Common myeloid progenitor, CD34-positive (primary cell): ENCODE measurements at regions of chr7 and their contacts with region 1.

Region 1: DNA sequence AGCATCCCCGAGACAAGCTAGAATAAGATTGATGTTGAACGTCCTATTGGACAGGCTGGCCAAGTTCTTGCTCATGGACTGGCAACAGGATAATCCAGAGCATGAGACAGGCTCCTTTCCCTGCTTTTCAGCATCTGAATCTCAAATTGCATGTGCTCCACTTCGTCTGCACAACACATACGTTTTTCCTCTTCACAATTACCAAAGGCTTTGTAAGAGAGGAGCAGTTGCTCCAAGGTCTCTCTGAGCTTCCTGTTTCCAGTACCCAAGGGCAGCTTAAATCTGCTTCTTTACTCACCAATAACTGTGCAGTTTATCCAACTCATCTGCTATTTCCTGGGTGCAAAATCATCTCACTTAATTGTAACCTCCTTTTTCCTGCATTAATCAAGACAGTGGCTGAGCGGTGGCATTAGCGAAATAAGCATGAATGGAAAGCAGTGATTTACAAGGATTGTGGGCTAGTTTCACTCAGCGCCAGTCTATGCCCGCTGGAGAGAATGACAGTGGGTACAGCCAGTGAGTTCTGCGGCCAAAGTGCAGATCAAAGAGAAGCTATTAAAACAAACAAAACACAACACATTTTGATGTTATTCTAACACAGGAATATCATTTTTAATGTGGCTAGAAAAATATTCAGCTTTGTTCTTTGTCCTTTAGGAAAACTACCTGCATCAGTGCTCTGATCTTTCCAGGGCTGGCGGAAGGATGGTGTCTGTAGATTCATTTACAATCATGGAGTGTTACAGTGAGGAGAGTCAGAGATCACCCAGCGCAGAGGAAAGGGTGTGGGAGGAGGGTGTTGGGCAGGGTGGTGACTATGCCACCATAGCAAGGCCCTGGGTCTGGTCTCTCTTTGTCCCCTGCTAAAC is 79.8 kb downstream of the CHN2 start:
- DNase-seq: peak in 2 of 3 donors; percentile 44 to 46
- H3K4me3 ChIP-seq: no peak overlapping the region
- H3K27ac ChIP-seq: no peak overlapping the region
- H3K4me1 ChIP-seq: peaks cover 15 to 27% (median 22%) of the 10 kb centered on the region in 4 experiments
- H3K27me3 ChIP-seq: no peaks in the 10 kb centered on the region

Region 2: DNA sequence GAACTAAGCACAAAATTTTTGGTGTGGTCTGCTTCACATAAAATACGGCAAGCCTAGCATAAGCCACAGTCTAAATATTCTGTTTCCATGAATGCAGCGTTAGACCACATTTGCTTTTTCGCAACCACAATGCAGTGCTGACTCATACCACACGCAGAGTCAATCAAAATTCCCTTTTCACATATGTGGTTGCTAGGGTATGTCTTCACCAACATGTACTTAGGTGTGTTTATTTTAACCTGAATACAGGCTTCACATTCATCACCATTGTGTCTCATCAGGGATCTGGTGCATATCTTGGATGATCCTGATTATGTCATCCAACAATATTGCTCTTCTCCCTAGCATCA is 11.0 kb after region 1 on chr7:
- CTCF ChIA-PET with region 1: interaction called, 10 read pairs
- POLR2A ChIA-PET with region 1: interaction called, 3 read pairs
- DNase-seq: peak; percentile 80 to 96 (median 95)
- H3K4me3 ChIP-seq: no peak overlapping the region
- H3K27ac ChIP-seq: no peak overlapping the region
- H3K4me1 ChIP-seq: peaks cover 13 to 53% (median 30%) of the 10 kb centered on the region in 4 experiments
- H3K27me3 ChIP-seq: no peaks in the 10 kb centered on the region